A549 (cell line): ENCODE measurements at regions of chr6 and their contacts with region 1.

Region 1: GRCh38 chr6:56902641-56903464 is 52.1 kb upstream of the BEND6 start:
- DNase-seq: peak in 1 of 2 experiments; percentile 15
- ATAC-seq: peak in 1 of 2 experiments; percentile 47; a peak in 2 of 6 replicates
- H3K4me3 ChIP-seq: no peak overlapping the region
- H3K27ac ChIP-seq: peak overlapping the region; percentile 35 to 68; a peak in 3 of 6 replicates
- H3K4me1 ChIP-seq: peaks cover 43% of the 10 kb centered on the region
- CTCF ChIP-seq: peak; percentile 71
- EP300 ChIP-seq: no peak
- POLR2A ChIP-seq: no peak
- RAD21 ChIP-seq: peak; percentile 61 to 62

Region 2: DNA sequence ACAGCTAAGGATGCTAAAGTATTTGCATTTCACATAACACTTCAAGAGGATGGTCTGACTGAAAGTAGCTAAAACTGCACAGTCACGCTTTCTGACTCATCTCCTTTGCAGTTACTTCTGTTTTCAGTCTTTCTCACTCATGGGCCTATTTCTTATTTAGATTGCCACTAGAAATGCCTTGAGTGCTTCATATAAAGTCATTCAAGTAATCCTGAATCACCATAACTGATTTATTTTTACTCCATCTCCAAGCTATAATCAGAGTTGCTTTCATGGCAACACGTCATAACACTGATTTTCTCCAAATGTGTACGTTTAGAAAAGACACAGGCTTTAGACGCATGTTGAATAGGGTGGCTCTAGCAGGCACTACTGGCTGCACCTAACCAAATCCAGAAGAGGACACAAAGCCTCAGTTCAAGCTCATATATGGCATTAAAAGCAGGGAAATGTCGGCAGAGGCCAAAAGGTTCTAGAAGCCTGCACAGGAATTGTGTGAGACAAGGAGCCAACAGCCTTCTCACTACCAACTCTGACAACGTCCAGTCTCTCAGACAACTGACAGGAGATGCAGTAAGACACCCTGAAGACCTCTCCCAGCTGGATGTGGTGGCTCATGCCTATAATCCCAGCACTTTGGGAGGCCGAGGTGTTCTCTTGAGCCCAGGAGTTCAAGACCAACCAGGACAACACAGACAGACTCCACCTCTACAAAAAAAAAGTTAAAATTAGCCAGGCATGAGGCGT is 12.0 kb before region 1 on chr6:
- CTCF ChIA-PET with region 1: interaction called, 42 read pairs
- POLR2A ChIA-PET with region 1: no interaction called
- DNase-seq: peak; percentile 58 to 80
- ATAC-seq: peak; percentile 79 to 87
- H3K4me3 ChIP-seq: no peak overlapping the region
- H3K27ac ChIP-seq: peak overlapping the region; percentile 98 to 99
- H3K4me1 ChIP-seq: peaks cover 46% of the 10 kb centered on the region
- CTCF ChIP-seq: no peak
- EP300 ChIP-seq: no peak; a peak in 1 of 5 replicates
- POLR2A ChIP-seq: no peak
- RAD21 ChIP-seq: no peak

Region 3: GRCh38 chr6:56914798-56915658 is 12.2 kb after region 1 on chr6:
- CTCF ChIA-PET with region 1: interaction called, 31 read pairs
- POLR2A ChIA-PET with region 1: no interaction called
- DNase-seq: no peak
- ATAC-seq: no peak
- H3K4me3 ChIP-seq: no peak overlapping the region
- H3K27ac ChIP-seq: no peak overlapping the region
- H3K4me1 ChIP-seq: peaks cover 10% of the 10 kb centered on the region; the same call in 1 of the 3 replicates
- CTCF ChIP-seq: no peak
- EP300 ChIP-seq: no peak
- POLR2A ChIP-seq: no peak
- RAD21 ChIP-seq: no peak

Region 4: DNA sequence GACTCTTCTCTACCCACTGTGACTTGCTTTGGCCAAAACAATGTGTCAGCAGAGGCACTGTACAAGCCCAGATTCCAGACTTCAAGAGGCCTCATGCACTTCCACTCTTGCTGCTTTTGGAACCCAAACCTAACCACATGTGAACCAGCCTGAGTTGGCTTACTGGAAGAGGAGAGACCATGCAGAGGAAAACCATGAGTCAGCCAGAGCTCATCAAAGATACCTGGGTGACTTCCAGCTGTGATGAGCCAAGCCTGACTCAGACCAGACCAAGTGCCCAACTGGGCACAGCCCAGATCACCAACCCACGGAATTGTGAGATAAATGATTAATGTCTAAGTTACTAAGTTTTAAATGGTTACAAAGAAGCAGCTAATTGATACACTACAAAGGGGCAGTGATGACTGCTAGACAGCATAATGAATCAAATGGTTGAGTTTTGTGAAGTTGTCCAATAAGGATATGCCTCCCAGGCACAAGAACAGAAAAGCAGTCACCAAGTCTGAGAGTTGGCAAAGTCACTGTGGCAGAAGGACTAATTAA is 35.9 kb after region 1 on chr6:
- CTCF ChIA-PET with region 1: interaction called, 13 read pairs
- POLR2A ChIA-PET with region 1: no interaction called
- DNase-seq: peak; percentile 72 to 88
- ATAC-seq: peak; percentile 100
- H3K4me3 ChIP-seq: no peak overlapping the region
- H3K27ac ChIP-seq: peak overlapping the region; percentile 60 to 85
- H3K4me1 ChIP-seq: peaks cover 17% of the 10 kb centered on the region
- CTCF ChIP-seq: no peak
- EP300 ChIP-seq: no peak
- POLR2A ChIP-seq: no peak
- RAD21 ChIP-seq: no peak

Region 5: DNA sequence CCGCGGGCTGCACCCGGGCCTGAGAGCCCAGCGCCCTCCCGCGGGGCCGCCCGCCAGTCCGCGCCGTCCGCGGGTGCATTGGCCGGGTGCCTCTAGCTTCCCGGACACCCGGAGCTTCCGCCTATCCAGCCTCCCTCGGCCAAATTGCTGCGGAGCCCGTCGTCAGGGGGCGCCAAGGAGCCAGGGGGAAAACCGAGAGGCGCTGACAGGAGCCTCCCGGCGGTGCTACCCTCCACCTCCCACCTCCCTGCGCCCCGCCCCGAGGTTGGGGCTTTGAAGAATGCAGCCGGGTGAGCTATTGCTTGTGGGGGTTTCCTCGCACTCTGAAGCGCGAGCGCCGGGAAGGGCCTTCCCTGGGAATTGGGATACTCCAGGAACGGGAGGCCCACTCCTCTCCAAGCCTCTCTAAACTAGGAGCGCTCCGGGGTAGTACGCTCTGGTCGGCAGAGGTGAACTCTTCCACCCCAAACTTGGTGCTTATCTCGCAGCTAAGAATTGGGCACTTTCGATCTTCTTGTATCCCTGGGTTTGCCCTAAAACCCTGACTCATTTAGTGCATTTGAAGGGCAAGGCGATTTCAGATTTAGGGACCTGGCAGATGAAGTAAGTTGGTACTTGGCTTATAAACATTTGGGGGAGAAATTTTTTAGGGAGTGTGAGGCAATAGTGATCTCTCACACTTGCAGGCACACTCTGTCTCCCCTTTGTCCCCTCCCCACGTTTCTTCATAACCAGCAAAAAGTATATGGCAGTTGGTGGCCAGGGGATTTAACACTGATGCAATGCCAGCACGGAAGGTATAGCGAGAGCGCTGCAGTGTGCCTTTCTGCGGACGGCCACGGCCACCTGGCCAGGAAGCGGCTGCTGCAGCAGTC is 52.6 kb after region 1 on chr6:
- CTCF ChIA-PET with region 1: interaction called, 45 read pairs
- POLR2A ChIA-PET with region 1: interaction called, 8 read pairs
- DNase-seq: peak; percentile 67 to 90
- ATAC-seq: peak; percentile 81 to 90
- H3K4me3 ChIP-seq: peak overlapping the region; percentile 89
- H3K27ac ChIP-seq: peak overlapping the region; percentile 95 to 97
- H3K4me1 ChIP-seq: peaks cover 46% of the 10 kb centered on the region
- CTCF ChIP-seq: peak; percentile 81
- EP300 ChIP-seq: no peak
- POLR2A ChIP-seq: peak; percentile 15; the same call in 1 of the 2 replicates
- RAD21 ChIP-seq: peak; percentile 63 to 73

Region 6: GRCh38 chr6:57021086-57021720 is 118.3 kb after region 1 on chr6:
- CTCF ChIA-PET with region 1: interaction called, 12 read pairs
- POLR2A ChIA-PET with region 1: no interaction called
- DNase-seq: peak; percentile 36 to 42
- ATAC-seq: peak; percentile 81
- H3K4me3 ChIP-seq: no peak overlapping the region
- H3K27ac ChIP-seq: no peak overlapping the region
- H3K4me1 ChIP-seq: no peaks in the 10 kb centered on the region
- CTCF ChIP-seq: peak; percentile 65
- EP300 ChIP-seq: no peak
- POLR2A ChIP-seq: no peak
- RAD21 ChIP-seq: peak; percentile 37 to 51; a peak in 4 of 5 replicates

Region 7: GRCh38 chr6:57257911-57258541 is 355.2 kb after region 1 on chr6:
- CTCF ChIA-PET with region 1: no interaction called
- POLR2A ChIA-PET with region 1: no interaction called
- DNase-seq: no peak
- ATAC-seq: no peak
- H3K4me3 ChIP-seq: no peak overlapping the region
- H3K27ac ChIP-seq: no peak overlapping the region
- H3K4me1 ChIP-seq: peaks cover 3% of the 10 kb centered on the region; the same call in 1 of the 3 replicates
- CTCF ChIP-seq: no peak
- EP300 ChIP-seq: no peak
- POLR2A ChIP-seq: no peak
- RAD21 ChIP-seq: no peak